Activated CD8-positive, alpha-beta memory T cell treated with anti-CD3 and anti-CD28 coated beads, Interleukin-2, amount 10 ng/mL, durations not matched to agents 7 days and 5 days (primary cell): ENCODE measurements at regions of chr17 and their contacts with region 1.

Region 1: DNA sequence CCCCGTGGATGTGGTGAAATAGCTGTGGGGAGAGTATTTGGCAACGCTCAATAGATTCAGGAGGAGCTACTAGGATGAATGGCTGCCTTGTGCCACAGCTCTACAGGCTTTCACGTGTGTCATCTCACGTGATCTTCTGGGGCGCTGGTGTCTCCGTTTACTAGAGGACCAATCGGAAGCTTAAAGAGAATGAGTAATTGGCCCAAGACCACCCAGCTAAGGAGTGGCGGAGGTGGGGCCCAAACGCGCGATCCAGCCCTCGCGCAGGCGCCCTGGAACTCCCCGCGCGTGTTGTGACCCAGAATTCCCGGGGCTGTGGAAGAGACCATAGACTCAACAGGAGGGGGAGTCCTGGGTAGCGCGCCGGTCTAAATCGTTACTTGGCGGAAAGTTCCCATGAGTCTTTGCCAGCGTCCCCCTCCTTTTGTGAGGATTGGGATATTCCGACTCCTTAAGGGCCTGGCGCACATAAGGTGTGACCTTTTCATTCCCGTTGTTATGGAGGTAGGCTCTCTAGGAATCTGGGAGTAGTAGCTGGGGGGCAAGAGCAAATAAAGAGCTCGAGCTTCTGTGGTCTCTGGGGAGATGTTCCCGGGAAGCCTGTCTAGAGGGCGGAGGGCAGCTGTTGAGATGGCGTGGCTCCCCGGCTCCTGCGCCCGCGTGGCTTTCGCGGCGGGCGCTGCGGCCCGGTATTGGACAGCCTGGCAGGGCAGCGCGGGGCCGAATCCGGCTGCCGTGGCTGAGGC is 23.4 kb downstream of the TRPV2 start:
- DNase-seq: peak; percentile 98
- ATAC-seq: peak; percentile 88
- H3K4me3 Mint-ChIP-seq: peak overlapping the region; percentile 98
- H3K27ac Mint-ChIP-seq: peak overlapping the region; percentile 98
- H3K4me1 Mint-ChIP-seq: peaks cover 45% of the 10 kb centered on the region
- H3K27me3 Mint-ChIP-seq: no peaks in the 10 kb centered on the region

Region 2: DNA sequence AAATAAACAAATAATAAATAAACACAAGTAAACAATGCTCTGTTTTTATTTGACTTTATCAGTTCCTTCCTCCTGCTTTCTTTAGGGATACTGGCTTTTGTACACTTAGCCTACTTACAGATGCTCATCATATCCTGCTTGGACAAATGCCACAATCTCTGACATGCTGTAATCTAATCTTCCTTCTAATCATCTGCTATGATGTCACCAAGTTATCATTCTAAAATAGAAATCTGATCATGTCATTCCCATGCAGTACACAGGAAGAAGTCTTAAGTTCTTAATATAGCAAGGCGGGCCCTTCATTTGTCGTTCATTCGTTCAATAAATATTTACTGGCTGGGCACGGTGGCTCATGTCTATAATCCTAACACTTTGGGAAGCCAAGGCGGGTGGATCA is 67.0 kb before region 1 on chr17:
- CTCF ChIA-PET with region 1: no interaction called
- DNase-seq: no peak
- ATAC-seq: no peak
- H3K4me3 Mint-ChIP-seq: no peak overlapping the region
- H3K27ac Mint-ChIP-seq: no peak overlapping the region
- H3K4me1 Mint-ChIP-seq: no peaks in the 10 kb centered on the region
- H3K27me3 Mint-ChIP-seq: no peaks in the 10 kb centered on the region

Region 3: DNA sequence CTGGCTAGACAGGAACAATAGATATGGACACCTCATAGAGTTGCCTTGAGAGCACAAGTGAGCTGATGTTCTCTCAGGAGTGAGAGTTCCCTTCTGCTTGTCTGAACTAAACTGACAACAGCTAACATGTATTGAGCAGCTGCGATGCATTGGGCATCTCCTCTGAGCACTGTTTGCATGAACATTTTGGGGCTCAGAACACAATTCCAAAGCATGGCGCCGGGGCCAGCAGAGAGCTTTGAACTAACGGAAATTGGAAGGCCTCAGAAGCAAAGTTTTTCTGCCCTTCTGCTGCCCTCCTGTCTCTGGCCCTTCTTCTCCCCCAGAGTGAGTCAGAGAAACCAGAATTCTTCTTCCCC is 14.7 kb after region 1 on chr17:
- CTCF ChIA-PET with region 1: interaction called, 55 read pairs
- DNase-seq: no peak
- ATAC-seq: no peak
- H3K4me3 Mint-ChIP-seq: no peak overlapping the region
- H3K27ac Mint-ChIP-seq: peak overlapping the region; percentile 21
- H3K4me1 Mint-ChIP-seq: peaks cover 11% of the 10 kb centered on the region
- H3K27me3 Mint-ChIP-seq: no peaks in the 10 kb centered on the region